Right ventricle myocardium superior (tissue), 1 donor: ENCODE measurements at regions of chr2 and their contacts with region 1.

Region 1: DNA sequence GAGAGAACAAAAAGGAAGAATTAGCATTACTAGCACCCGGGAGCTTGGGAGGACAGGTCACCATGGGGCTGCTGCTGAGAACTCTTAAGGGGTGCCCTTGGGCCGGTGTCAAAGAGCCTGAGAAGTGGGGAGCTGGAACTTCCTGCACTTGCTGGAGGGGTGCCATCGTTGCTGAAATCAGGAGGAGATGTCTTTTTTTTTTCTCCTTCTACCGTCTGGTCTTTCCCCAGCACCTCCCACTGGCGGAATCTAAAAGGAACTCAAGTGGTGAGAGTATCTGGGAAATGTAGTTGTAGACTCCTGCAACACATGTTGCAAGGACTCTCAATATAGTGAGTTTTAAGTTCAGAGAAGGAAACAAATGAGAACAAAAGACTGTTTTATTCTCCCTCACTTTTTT is 6.1 kb upstream of the AMMECR1L start:
- DNase-seq: no peak
- ATAC-seq: no peak

Region 2: GRCh38 chr2:128027801-128028667 is 136.2 kb after region 1 on chr2 and contains the start of gene SAP130:
- intact Hi-C with region 1: loop called (anchors 10 kb)
- DNase-seq: peak; percentile 100
- ATAC-seq: peak; percentile 95
- total RNA-seq, gene SAP130: 13.0 TPM

Region 3: GRCh38 chr2:128041561-128041960 is 149.8 kb after region 1 on chr2:
- intact Hi-C with region 1: no loop called
- DNase-seq: no peak
- ATAC-seq: no peak